CD8-positive, alpha-beta memory T cell (primary cell): ENCODE measurements at regions of chr6 and their contacts with region 1.

Region 1: DNA sequence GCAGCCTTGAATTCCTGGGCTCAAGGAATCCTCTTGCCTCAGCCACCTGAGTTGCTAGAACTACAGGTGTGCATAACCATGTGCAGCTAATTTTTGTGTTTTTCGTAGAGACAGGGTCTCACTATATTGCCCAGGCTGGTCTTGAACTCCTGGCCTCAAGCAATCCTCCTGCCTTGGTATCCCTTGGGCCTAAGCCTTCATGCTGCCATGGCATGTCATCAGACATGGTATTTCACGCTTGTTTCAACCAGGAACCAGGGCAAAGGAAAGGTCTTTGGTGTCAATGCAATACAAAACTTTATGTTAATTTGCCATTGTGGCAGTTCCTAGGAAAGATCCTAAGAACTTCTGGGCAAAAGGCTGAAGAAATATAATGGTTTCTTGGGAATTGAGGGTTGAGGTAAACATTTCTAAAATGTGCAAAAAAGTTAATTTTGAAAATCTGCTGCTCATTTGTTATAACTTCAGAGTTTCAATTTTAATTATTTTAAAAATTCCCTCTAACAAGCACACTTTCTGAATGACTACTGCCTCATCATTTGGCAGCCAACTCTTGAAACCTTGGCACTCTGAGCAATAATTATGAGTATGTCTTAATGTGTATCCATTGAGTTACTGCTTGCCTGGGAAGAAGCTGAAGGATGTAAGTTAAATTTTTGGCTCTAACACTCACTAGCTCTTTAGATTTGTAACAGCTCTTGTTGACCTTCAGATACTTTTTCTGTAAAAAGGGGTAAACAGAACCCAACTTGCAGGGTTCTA is 154.1 kb downstream of the GJA10 start:
- DNase-seq: no peak
- H3K4me3 ChIP-seq: no peak overlapping the region
- H3K4me3 Mint-ChIP-seq: no peak overlapping the region
- H3K27ac ChIP-seq: no peak overlapping the region
- H3K27ac Mint-ChIP-seq: peak overlapping the region in 2 of 8 donors; percentile 3 to 28
- H3K4me1 ChIP-seq: peaks cover 26% of the 10 kb centered on the region
- H3K4me1 Mint-ChIP-seq: peaks cover 21 to 32% (median 25%) of the 10 kb centered on the region in 3 donors
- H3K27me3 ChIP-seq: no peaks in the 10 kb centered on the region
- H3K27me3 Mint-ChIP-seq: no peaks in the 10 kb centered on the region

Region 2: GRCh38 chr6:89776583-89777233 is 271.7 kb before region 1 on chr6:
- CTCF ChIA-PET with region 1: no interaction called
- POLR2A ChIA-PET with region 1: no interaction called
- DNase-seq: no peak
- H3K4me3 ChIP-seq: no peak overlapping the region
- H3K4me3 Mint-ChIP-seq: no peak overlapping the region
- H3K27ac ChIP-seq: no peak overlapping the region
- H3K27ac Mint-ChIP-seq: no peak overlapping the region
- H3K4me1 ChIP-seq: no peaks in the 10 kb centered on the region
- H3K4me1 Mint-ChIP-seq: no peaks in the 10 kb centered on the region
- H3K27me3 ChIP-seq: no peaks in the 10 kb centered on the region
- H3K27me3 Mint-ChIP-seq: no peaks in the 10 kb centered on the region

Region 3: GRCh38 chr6:90008908-90009501 is 39.4 kb before region 1 on chr6:
- CTCF ChIA-PET with region 1: no interaction called
- POLR2A ChIA-PET with region 1: interaction called, 10 read pairs
- DNase-seq: no peak
- H3K4me3 ChIP-seq: no peak overlapping the region
- H3K4me3 Mint-ChIP-seq: no peak overlapping the region
- H3K27ac ChIP-seq: no peak overlapping the region
- H3K27ac Mint-ChIP-seq: peak overlapping the region in 5 of 8 donors; percentile 20 to 77 (median 39)
- H3K4me1 ChIP-seq: no peaks in the 10 kb centered on the region
- H3K4me1 Mint-ChIP-seq: peaks cover 15 to 29% (median 20%) of the 10 kb centered on the region in 3 donors
- H3K27me3 ChIP-seq: no peaks in the 10 kb centered on the region
- H3K27me3 Mint-ChIP-seq: peaks cover 0 to 2% of the 10 kb centered on the region in 2 donors